ENCODE measurements at regions of chr17 and their contacts with region 1.

Region 1: DNA sequence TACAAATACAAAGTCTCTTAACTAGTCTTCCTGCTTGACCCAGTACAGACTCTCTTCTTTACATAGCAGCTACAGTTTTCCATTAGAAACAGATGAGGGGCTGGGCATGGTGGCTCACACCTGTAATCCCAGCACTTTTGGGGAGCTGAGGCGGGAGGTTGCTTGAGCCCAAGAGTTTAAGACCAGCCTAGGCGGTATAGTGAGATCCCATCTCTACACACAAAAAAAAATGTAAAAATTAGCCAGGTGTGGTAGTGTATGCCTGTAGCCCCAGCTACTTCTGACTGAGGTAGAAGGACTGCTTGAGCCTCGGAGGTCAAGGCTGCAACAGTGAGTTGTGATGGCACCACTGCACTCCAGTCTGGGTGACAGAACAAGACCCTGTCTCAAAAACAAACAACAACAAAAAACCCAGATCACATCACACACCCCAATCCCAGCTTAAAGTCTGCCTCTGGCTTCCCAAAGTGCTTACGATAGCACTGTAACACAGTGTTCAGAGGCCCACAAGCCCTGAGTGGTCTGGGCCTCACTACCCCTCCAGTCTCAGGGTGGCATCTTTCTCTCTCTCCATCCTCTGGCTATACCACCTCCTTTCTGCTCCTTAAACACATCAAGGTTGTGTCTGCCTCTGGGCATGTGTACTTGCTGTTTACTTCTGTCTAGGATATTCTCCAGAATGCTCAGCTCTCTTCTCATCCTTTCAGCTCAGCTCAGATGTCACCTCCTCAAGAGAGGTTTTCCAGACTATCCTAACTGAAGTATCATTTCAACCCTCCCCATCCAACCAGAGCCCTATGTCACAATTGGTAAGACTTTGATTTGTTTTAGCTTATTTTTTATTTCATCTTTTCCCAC is 4.0 kb downstream of the MMD start:
- DNase-seq: no peak
- ATAC-seq: no peak
- H3K4me3 ChIP-seq: no peak overlapping the region
- H3K4me3 Mint-ChIP-seq: no peak overlapping the region
- H3K27ac ChIP-seq: no peak overlapping the region
- H3K27ac Mint-ChIP-seq: peak overlapping the region; percentile 34 to 65
- H3K4me1 ChIP-seq: peaks cover 10 to 19% of the 10 kb centered on the region in 2 experiments
- H3K4me1 Mint-ChIP-seq: peaks cover 40 to 61% (median 60%) of the 10 kb centered on the region in 3 donors
- H3K27me3 ChIP-seq: peaks cover 0 to under 1% of the 10 kb centered on the region in 2 experiments
- H3K27me3 Mint-ChIP-seq: no peaks in the 10 kb centered on the region

Region 2: DNA sequence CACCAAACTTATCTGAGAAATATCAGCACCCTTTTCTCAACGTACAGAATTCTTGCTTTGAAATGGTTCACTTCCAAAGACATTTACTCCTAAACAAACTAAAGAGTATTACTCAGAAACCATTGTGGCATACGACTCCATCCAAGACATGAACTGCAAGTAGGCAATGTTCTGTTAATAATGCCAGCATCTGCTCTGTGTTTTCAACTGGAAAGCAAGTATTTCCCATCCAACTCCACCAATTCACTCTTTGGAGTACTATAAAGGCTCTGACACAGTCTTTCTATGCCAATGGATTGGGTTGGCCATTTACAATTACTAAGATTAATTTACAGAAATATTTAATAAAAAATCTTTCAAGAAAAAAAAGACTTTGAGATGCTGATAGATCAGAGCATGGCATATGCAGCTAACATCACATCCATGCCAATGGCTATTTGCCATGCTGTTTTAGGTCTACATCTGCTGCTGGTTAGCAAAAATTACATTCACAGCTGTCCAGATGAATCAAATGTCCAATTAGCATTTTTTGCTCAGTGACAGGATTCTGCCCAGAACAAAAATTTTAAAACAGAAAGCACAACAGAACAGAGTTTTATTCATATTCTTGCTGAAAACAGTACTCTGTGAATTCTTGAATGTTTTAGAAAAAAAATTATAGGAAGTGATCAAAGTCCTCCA is 218.8 kb before region 1 on chr17:
- CTCF ChIA-PET with region 1: no interaction called
- POLR2A ChIA-PET with region 1: no interaction called
- DNase-seq: no peak
- ATAC-seq: no peak
- H3K4me3 ChIP-seq: no peak overlapping the region
- H3K4me3 Mint-ChIP-seq: no peak overlapping the region
- H3K27ac ChIP-seq: no peak overlapping the region
- H3K27ac Mint-ChIP-seq: no peak overlapping the region
- H3K4me1 ChIP-seq: no peaks in the 10 kb centered on the region
- H3K4me1 Mint-ChIP-seq: no peaks in the 10 kb centered on the region
- H3K27me3 ChIP-seq: no peaks in the 10 kb centered on the region
- H3K27me3 Mint-ChIP-seq: peaks cover 13 to 19% of the 10 kb centered on the region in 2 donors

Region 3: GRCh38 chr17:55452139-55452790 is 34.6 kb after region 1 on chr17:
- CTCF ChIA-PET with region 1: interaction called in 1 of 2 experiments, 10 read pairs
- POLR2A ChIA-PET with region 1: no interaction called
- DNase-seq: no peak
- ATAC-seq: no peak
- H3K4me3 ChIP-seq: no peak overlapping the region
- H3K4me3 Mint-ChIP-seq: no peak overlapping the region
- H3K27ac ChIP-seq: no peak overlapping the region
- H3K27ac Mint-ChIP-seq: no peak overlapping the region
- H3K4me1 ChIP-seq: peaks cover 0 to 3% of the 10 kb centered on the region in 2 experiments
- H3K4me1 Mint-ChIP-seq: peaks cover 0 to 7% (median 2%) of the 10 kb centered on the region in 3 donors
- H3K27me3 ChIP-seq: no peaks in the 10 kb centered on the region
- H3K27me3 Mint-ChIP-seq: peaks cover 6 to 11% of the 10 kb centered on the region in 2 donors

Measured in T-cell (primary cell).